ENCODE measurements at regions of chr9 and their contacts with region 1.

Region 1: GRCh38 chr9:80061940-80062339 is 490.2 kb downstream of the TLE4 start:
- DNase-seq: peak; percentile 67 to 83
- ATAC-seq: peak; percentile 97
- H3K4me3 ChIP-seq: no peak overlapping the region
- H3K27ac ChIP-seq: peak overlapping the region; percentile 86 to 91 (median 90)
- H3K4me1 ChIP-seq: peaks cover 25 to 27% of the 10 kb centered on the region in 2 donors
- H3K27me3 ChIP-seq: no peaks in the 10 kb centered on the region
- CTCF ChIP-seq: no peak
- POLR2A ChIP-seq: peak in 1 of 2 donors; percentile 36

Region 2: GRCh38 chr9:78539904-78540303 is 1522.0 kb before region 1 on chr9:
- in situ Hi-C with region 1: loop called in 1 of 4 experiments (anchors 25 kb)
- intact Hi-C with region 1: no loop called
- DNase-seq: peak; percentile 63 to 79
- ATAC-seq: peak; percentile 98 to 99
- H3K4me3 ChIP-seq: no peak overlapping the region
- H3K27ac ChIP-seq: peak overlapping the region in 3 of 4 donors; percentile 64 to 76 (median 65)
- H3K4me1 ChIP-seq: peaks cover 7 to 9% of the 10 kb centered on the region in 2 donors
- H3K27me3 ChIP-seq: no peaks in the 10 kb centered on the region
- CTCF ChIP-seq: no peak
- POLR2A ChIP-seq: no peak

Region 3: GRCh38 chr9:79686381-79687130 is 375.4 kb before region 1 on chr9:
- in situ Hi-C with region 1: no loop called
- intact Hi-C with region 1: loop called (anchors 2 kb)
- DNase-seq: peak; percentile 20 to 39
- ATAC-seq: peak; percentile 79 to 89
- H3K4me3 ChIP-seq: peak overlapping the region in 1 of 4 donors; percentile 8
- H3K27ac ChIP-seq: peak overlapping the region; percentile 3 to 52 (median 21)
- H3K4me1 ChIP-seq: peaks cover 43 to 63% of the 10 kb centered on the region in 2 donors
- H3K27me3 ChIP-seq: no peaks in the 10 kb centered on the region
- CTCF ChIP-seq: no peak
- POLR2A ChIP-seq: no peak

Region 4: DNA sequence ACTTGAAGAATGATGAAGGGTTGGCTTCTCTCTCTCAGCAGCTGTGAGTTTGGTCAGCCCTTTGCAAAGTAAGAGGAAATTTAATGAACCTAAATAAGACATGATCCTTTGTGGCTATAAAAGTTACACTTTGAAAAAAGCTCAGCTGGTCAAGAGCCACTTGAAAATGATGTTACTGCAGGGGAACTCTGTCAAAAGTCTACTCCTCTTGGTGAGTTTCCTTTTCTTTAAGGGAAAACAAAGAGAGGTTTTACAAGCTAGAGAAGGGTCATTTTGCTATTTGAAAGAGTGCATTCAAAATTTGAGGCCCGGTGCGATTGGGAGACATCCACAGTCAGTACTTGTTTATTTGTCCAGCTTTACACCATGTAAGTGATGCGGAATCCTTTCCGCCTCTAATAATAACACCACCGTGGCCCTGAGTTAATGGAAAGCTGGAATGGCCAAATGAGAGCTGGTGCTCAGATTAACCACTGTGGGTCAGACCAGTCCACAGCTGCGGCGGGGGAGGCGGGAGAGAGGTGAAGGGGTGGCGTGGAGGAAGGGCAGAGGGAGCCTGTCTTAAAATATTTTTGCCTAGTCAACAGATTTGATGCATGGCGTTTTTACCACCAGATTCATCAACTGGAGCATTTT is 86.2 kb before region 1 on chr9:
- in situ Hi-C with region 1: loop called in 2 of 4 experiments (anchors 5 to 10 kb)
- intact Hi-C with region 1: loop called (anchors 1 kb)
- DNase-seq: peak; percentile 87
- ATAC-seq: peak; percentile 87 to 88
- H3K4me3 ChIP-seq: peak overlapping the region; percentile 5 to 44 (median 32)
- H3K27ac ChIP-seq: peak overlapping the region; percentile 78 to 89 (median 82)
- H3K4me1 ChIP-seq: peaks cover 16 to 31% of the 10 kb centered on the region in 2 donors
- H3K27me3 ChIP-seq: no peaks in the 10 kb centered on the region
- CTCF ChIP-seq: peak in 2 of 5 experiments; percentile 36 to 49
- POLR2A ChIP-seq: no peak

Region 5: DNA sequence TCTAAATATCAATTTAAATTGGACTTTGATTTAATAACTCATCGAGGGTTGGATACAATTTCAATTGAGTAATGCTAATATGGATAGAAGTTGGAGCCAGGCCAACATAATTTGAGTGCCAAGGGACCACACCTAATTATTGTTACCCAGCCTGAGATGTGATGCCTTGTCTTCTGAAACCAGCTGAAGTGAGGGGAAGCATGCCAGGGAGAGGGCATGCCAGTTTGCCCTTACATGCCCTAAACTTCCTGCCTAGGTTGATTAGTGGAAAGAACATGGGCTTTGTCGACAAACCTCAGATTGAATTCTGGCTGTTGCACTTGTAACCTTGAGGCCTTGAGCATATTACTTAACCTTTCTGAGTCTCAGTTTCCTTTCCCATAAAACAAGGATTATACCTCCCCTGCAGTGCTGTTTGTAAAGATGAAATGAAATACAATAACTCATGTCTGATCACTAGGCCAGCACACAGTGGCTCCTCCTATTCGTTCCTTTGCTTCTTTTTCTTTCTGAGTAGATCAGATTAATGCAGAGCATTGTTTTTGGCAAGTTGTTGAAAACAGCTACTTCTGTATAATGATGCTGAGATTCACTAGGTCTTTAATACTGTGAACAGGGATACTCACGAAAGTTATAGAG is 77.4 kb before region 1 on chr9:
- in situ Hi-C with region 1: loop called in 2 of 4 experiments (anchors 5 to 10 kb)
- intact Hi-C with region 1: loop called (anchors 2 kb)
- DNase-seq: peak; percentile 14 to 35
- ATAC-seq: peak; percentile 71 to 75
- H3K4me3 ChIP-seq: no peak overlapping the region
- H3K27ac ChIP-seq: peak overlapping the region; percentile 45 to 71 (median 67)
- H3K4me1 ChIP-seq: peaks cover 21 to 24% of the 10 kb centered on the region in 2 donors
- H3K27me3 ChIP-seq: no peaks in the 10 kb centered on the region
- CTCF ChIP-seq: no peak
- POLR2A ChIP-seq: no peak

Measured in gastrocnemius medialis (tissue), 4 donors.